ENCODE measurements at regions of chr7 and their contacts with region 1.

Region 1: DNA sequence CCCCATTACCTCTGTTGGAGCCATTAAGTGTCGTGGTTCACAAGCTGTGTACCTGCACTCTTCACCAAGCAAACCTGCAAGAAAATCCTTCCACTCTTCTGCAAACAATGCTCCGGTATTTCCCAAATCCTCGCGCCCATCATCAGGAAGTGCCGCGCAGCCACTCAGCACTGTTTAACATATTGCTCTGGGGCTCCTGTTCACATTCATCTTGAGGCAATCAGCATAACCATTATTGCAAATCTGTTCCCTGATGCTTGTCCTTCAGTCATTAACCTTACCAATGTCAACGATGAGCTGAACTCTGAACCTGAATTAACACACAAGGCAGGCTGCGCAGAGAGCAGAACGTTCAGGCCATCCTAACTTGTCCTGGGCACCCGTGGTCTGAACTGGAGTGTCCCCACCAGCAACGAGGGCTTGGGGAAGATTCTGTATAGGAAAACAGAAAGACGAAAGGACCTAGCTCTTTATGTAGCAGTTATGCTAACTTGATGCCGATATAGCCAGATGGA is 751.4 kb upstream of the AUTS2 start:
- DNase-seq: no peak
- ATAC-seq: no peak

Region 2: DNA sequence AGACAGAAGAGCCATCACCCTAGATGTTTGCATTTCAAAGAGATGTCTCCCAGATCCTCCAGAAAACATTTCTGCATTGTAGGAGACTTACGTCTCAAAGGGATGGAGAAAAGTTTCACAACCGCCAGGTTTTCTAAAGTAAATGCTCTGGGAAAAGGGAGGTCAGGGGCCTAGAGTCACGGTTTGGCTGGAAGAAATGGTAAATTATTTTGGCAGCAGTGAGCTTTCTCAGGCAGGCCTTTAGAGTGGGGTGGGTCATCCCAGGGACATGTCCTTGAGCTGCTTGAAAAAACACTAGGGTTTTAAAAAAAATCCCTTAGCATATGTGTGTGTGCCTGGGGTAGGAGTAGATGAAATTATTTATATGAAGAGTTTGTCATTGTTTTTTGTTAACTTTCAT is 1121.4 kb before region 1 on chr7:
- intact Hi-C with region 1: loop called (anchors 5 kb)
- DNase-seq: no peak
- ATAC-seq: peak; percentile 91

Region 3: DNA sequence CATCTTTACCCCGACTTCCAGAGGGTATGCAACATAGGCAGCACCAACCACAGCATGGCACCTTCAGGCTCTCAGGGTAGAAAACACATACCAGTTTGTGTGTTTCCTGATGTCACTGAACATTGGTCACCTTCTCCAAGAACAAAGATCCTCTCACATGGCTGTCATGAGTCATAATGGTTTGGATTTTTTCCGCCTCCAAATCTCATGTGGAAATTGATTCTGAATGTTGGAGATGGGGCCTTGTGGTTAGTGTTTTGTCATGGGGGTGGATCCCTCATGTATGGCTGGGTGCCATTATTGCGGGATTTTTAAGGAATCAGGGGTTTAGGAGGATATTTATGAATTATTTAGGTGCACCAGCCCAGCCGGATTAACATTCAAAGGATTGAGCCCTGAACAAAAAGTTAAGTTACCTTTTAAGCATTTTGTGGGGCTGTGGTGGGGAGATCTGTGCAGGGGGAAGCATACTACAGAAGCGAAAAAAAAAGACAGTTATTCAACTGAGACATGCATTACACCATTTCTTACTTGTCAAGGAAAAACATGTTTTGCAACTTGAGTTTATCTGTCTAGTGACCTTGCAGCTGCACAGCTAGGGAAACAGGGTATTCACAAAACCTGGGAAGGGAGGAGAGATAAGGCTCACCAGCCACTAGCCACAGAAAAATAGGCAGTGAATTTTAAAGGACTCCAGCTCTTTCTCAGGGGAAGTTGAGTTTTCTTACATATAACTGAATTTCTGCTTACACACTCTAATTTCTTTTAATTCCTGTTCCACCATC is 22.7 kb before region 1 on chr7:
- intact Hi-C with region 1: no loop called
- DNase-seq: no peak
- ATAC-seq: no peak

Measured in sciatic nerve (tissue), 2 donors.